ENCODE measurements at regions of chr7 and their contacts with region 1.

Region 1: DNA sequence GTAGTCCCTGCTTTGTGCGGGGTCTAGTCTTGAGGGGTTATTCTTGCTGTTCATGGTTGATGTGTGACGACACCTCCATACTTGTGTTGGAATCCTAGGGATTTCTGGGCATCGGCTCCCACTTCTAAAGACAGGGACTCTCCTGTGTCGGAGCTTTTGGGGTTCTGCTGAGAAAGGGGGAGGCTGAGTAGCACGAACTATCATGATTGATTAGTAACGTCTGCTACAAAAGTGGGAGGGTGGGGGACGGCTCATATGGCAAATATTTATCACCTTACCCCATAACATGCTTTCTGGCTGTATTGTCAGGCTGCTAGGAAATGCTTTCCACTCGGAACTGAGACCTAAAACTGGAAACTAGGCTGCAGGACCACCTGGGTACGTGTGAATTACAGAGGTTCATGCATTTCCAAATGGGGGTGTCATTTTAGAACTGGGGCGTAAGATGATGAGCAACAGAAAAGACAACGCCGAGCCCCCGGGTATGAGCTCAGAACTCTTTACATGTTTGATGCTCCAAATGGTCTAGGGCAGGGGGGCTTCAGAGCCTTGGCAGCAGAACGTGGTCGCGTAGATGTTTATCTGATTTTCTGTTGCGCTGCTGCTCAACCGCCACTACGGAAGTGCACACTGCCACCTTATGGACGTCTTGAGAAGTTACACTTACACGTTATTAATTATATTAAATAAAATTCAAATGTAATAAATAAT is 15.1 kb upstream of the NME8 start:
- DNase-seq: peak; percentile 28 to 47 (median 33)
- ATAC-seq: peak in 1 of 2 donors; percentile 49
- H3K4me3 ChIP-seq: peak overlapping the region; percentile 43
- H3K27ac ChIP-seq: no peak overlapping the region
- H3K4me1 ChIP-seq: no peaks in the 10 kb centered on the region
- H3K27me3 ChIP-seq: no peaks in the 10 kb centered on the region

Region 2: DNA sequence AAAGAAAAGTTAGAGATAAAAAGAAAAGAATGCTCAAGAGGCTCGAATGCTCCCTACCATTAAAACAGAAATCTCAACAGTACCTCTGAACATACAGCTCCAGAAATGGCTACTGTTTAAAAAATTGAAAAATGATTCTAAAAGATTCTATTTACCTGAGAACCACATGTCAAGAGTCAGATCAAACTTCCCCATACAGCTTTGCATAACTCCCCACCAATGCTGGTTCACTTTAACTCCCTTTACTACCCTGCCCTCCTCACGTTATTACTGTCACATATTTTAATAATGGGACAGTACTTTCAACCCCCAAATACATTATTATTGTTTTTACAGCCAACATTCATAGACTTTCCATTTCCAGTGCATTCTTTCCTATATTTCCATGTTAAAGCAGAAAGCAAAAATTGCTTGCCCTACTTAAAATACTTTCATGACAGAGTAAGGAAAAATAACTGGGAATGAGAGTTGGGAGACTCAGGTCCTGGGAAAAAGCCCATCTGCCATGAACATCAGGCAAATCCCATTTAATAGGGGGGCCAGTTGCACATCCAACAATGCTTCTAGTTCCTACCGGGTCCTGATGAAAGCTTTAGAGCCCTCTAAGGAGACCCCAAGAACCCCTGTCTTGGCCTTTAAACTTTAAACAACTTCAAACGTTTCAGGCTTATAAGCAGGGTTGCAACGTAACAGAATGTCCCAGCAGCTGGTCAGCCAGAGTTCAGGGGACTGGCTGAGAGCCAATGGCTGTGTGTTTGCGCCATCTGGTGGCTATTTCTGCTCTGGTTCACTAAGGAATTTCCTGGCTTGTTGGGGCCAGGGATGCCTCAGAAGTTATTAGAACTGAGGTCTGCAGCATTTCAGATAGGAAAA is 632.0 kb before region 1 on chr7:
- intact Hi-C with region 1: loop called in 3 of 4 experiments (anchors 5 to 10 kb)
- DNase-seq: peak; percentile 75 to 90 (median 85)
- ATAC-seq: peak; percentile 85 to 89
- H3K4me3 ChIP-seq: no peak overlapping the region
- H3K27ac ChIP-seq: peak overlapping the region; percentile 94
- H3K4me1 ChIP-seq: peaks cover 4% of the 10 kb centered on the region
- H3K27me3 ChIP-seq: no peaks in the 10 kb centered on the region

Region 3: DNA sequence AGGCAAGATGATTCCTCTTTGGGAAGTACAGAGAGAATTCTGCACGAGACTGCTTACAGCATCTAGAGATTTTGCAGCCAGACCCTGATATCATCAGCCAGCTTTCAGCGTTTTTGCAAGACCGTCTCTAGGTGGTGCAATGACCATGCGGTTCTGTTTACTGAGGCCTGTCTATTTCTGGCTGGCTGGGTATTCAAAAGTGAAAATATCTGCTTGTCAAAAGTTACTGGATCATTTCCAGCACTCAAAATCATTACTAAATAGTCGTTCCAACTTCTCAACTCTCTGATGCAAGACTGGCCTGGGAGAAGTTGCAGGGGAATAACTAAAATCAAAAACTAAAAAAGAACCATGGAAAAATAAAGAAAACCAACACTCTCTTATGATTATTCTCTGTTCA is 624.7 kb before region 1 on chr7:
- intact Hi-C with region 1: loop called in 3 of 4 experiments (anchors 5 to 10 kb)
- DNase-seq: peak; percentile 65 to 83 (median 66)
- ATAC-seq: peak; percentile 89 to 95
- H3K4me3 ChIP-seq: no peak overlapping the region
- H3K27ac ChIP-seq: no peak overlapping the region
- H3K4me1 ChIP-seq: peaks cover 7% of the 10 kb centered on the region
- H3K27me3 ChIP-seq: no peaks in the 10 kb centered on the region

Region 4: GRCh38 chr7:37234928-37235327 is 598.3 kb before region 1 on chr7:
- intact Hi-C with region 1: loop called in 1 of 4 experiments (anchors 10 kb)
- DNase-seq: no peak
- ATAC-seq: no peak
- H3K4me3 ChIP-seq: no peak overlapping the region
- H3K27ac ChIP-seq: no peak overlapping the region
- H3K4me1 ChIP-seq: no peaks in the 10 kb centered on the region
- H3K27me3 ChIP-seq: no peaks in the 10 kb centered on the region

Region 5: GRCh38 chr7:37510043-37510634 is 323.1 kb before region 1 on chr7:
- intact Hi-C with region 1: loop called in 1 of 4 experiments (anchors 10 kb)
- DNase-seq: no peak
- ATAC-seq: no peak
- H3K4me3 ChIP-seq: no peak overlapping the region
- H3K27ac ChIP-seq: no peak overlapping the region
- H3K4me1 ChIP-seq: no peaks in the 10 kb centered on the region
- H3K27me3 ChIP-seq: no peaks in the 10 kb centered on the region

Region 6: GRCh38 chr7:37549076-37549941 is 284.0 kb before region 1 on chr7:
- intact Hi-C with region 1: no loop called
- DNase-seq: no peak
- ATAC-seq: peak; percentile 29 to 48
- H3K4me3 ChIP-seq: no peak overlapping the region
- H3K27ac ChIP-seq: no peak overlapping the region
- H3K4me1 ChIP-seq: no peaks in the 10 kb centered on the region
- H3K27me3 ChIP-seq: no peaks in the 10 kb centered on the region

Region 7: DNA sequence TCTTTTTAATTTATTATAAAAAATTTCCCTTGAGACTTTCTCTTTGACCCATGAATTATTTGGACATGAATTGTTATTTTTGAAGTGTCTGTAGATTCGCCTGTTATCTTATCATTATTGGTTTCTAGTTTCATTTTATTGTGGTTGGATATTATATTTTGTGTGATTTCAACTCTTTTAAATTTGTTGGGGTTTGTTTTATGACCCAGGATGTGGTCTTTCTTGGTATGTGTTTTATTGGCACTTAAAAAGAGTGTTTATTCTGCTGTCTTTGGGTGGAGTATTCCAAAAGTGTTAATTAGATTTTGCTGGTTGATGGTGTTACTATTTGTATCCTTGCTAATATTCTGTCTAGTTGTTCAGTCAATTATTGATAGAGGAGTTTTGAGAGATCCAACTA is 200.2 kb before region 1 on chr7:
- intact Hi-C with region 1: loop called in 2 of 4 experiments (anchors 5 to 10 kb)
- DNase-seq: no peak
- ATAC-seq: no peak
- H3K4me3 ChIP-seq: no peak overlapping the region
- H3K27ac ChIP-seq: no peak overlapping the region
- H3K4me1 ChIP-seq: no peaks in the 10 kb centered on the region
- H3K27me3 ChIP-seq: no peaks in the 10 kb centered on the region

Region 8: GRCh38 chr7:37786741-37787569 is 46.3 kb before region 1 on chr7:
- intact Hi-C with region 1: no loop called
- DNase-seq: no peak
- ATAC-seq: no peak
- H3K4me3 ChIP-seq: no peak overlapping the region
- H3K27ac ChIP-seq: no peak overlapping the region
- H3K4me1 ChIP-seq: peaks cover 3% of the 10 kb centered on the region
- H3K27me3 ChIP-seq: no peaks in the 10 kb centered on the region

Measured in right cardiac atrium (tissue), 5 donors.